ENCODE measurements at regions of chr5 and their contacts with region 1.

Region 1: DNA sequence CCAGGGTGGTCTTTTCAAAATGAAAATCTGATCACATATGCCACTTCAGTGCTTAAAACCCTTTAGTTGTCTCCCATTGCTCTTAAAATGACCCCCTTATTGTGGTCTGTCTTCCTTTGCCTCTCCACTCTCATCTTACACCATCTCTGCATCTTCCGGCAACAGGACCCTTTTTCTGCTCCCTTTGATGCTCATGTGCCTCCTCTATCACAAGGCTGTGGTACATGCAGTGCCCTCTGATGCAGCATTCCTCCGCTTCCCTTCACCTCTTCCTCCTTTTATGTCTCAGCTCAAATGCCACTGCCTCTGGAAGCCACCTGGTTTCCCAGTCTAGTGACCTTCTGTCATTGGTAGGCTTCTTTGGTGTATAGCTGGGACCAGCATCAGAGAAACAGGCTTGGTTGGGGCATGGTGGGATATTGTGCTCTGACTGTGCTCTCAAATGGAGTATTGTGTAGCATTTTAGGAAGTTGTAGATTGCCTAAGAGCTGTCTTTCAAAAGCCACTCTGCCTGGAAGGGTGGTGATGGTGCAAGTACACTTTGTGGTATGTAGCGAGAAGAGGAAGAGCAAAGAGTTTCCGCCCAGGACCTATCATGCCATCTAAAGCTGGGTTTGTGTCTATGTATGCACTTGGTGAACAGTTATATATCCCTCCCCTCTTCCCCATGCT is 28.1 kb downstream of the ARHGAP26 start:
- H3K4me3 Mint-ChIP-seq: peak overlapping the region; percentile 44
- H3K27ac Mint-ChIP-seq: peak overlapping the region; percentile 87
- H3K4me1 Mint-ChIP-seq: peaks cover 86% of the 10 kb centered on the region
- H3K27me3 Mint-ChIP-seq: no peaks in the 10 kb centered on the region

Region 2: GRCh38 chr5:142769741-142770631 is 28.2 kb before region 1 on chr5 and contains the start of gene ARHGAP26:
- intact Hi-C with region 1: loop called (anchors 2 kb)
- H3K4me3 Mint-ChIP-seq: peak within 1 kb of the TSS; percentile 98
- H3K27ac Mint-ChIP-seq: peak within 1 kb of the TSS; percentile 94
- H3K4me1 Mint-ChIP-seq: peaks cover 58% of the 10 kb centered on the region
- H3K27me3 Mint-ChIP-seq: no peaks in the 10 kb centered on the region

Region 3: GRCh38 chr5:142825378-142826089 is 27.3 kb after region 1 on chr5:
- intact Hi-C with region 1: no loop called
- H3K4me3 Mint-ChIP-seq: no peak overlapping the region
- H3K27ac Mint-ChIP-seq: peak overlapping the region; percentile 78
- H3K4me1 Mint-ChIP-seq: peaks cover 96% of the 10 kb centered on the region
- H3K27me3 Mint-ChIP-seq: no peaks in the 10 kb centered on the region

Region 4: DNA sequence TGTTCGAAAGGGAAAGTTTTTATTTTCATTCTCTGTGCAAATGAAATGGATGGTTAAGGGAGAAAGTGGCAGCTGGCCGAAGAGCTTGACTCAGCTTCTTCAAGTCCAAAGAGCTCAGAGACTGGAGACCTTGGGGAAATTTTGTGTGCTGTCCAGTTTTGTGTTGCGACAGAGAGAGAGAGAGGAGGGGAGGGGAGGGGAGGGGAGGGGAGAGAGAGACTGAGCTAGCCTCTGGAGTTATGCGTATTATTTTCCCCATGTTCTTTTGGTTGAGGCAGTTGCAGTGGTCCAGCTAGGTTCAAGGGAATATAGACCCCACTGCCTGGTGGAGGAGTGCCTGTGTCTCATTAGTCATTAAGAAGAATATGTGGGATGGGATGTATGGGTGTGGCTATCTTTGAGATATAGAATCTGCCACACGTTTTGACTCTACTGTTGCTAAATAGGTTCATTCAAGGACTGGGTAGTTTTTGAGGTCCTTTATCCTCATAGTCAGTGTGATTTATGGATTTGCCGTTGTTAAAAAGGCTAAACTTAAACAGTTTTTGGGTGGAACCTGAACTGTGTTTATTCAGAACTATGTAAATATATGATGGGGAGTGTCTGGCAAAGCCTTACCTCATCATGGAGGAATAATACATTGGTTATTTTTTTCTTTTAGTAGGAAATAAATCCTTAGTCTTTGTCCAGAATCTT is 41.6 kb after region 1 on chr5:
- intact Hi-C with region 1: loop called (anchors 5 kb)
- H3K4me3 Mint-ChIP-seq: no peak overlapping the region
- H3K27ac Mint-ChIP-seq: peak overlapping the region; percentile 39
- H3K4me1 Mint-ChIP-seq: peaks cover 79% of the 10 kb centered on the region
- H3K27me3 Mint-ChIP-seq: no peaks in the 10 kb centered on the region

Measured in dendritic cell treated with granulocyte-macrophage colony-stimulating factor and Interleukin-4, amounts not matched to agents 40 ng/mL and 50 ng/mL, for 4 days (primary cell).